ENCODE measurements at regions of chr2 and their contacts with region 1.

Region 1: GRCh38 chr2:42503291-42503690 is 9.5 kb upstream of the KCNG3 start:
- DNase-seq: no peak
- ATAC-seq: no peak
- H3K4me3 ChIP-seq: no peak overlapping the region
- H3K27ac ChIP-seq: peak overlapping the region; percentile 82
- H3K4me1 ChIP-seq: peaks cover 51% of the 10 kb centered on the region
- H3K27me3 ChIP-seq: no peaks in the 10 kb centered on the region
- CTCF ChIP-seq: no peak
- EP300 ChIP-seq: no peak
- POLR2A ChIP-seq: no peak
- RAD21 ChIP-seq: no peak

Region 2: DNA sequence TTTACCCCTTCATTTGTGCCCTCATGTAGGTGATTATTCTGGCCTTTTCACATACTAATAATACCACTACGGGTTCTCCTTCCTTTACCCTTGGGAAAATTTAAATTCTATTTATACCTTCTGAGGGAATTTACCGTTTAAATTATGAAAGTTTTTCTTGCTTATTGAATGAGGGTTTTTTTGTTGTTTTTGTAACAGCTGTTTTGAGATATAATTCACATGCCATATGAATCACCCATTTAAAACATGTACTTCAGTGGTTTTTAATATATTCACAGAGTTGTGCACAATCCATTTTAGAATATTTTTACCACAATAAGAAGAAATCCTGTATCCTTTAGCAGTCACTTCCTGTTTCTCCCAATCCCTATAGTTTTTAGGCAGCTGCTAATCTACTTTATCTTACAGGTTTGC is 279.4 kb before region 1 on chr2:
- CTCF ChIA-PET with region 1: no interaction called
- POLR2A ChIA-PET with region 1: no interaction called
- in situ Hi-C with region 1: no loop called
- intact Hi-C with region 1: no loop called
- DNase-seq: no peak
- ATAC-seq: no peak
- H3K4me3 ChIP-seq: no peak overlapping the region
- H3K27ac ChIP-seq: no peak overlapping the region
- H3K4me1 ChIP-seq: peaks cover 98% of the 10 kb centered on the region
- H3K27me3 ChIP-seq: no peaks in the 10 kb centered on the region
- CTCF ChIP-seq: no peak
- EP300 ChIP-seq: no peak
- POLR2A ChIP-seq: no peak
- RAD21 ChIP-seq: no peak

Region 3: GRCh38 chr2:42568401-42569115 is 65.3 kb after region 1 on chr2 and contains the start of gene MTA3:
- CTCF ChIA-PET with region 1: no interaction called
- POLR2A ChIA-PET with region 1: interaction called, 5 read pairs
- in situ Hi-C with region 1: no loop called
- intact Hi-C with region 1: loop called (anchors 2 kb)
- DNase-seq: peak; percentile 27
- ATAC-seq: peak; percentile 74
- H3K4me3 ChIP-seq: peak within 1 kb of the TSS; percentile 74 to 95 (median 75)
- H3K27ac ChIP-seq: peak within 1 kb of the TSS; percentile 79
- H3K4me1 ChIP-seq: peaks cover 53% of the 10 kb centered on the region
- H3K27me3 ChIP-seq: no peaks in the 10 kb centered on the region; a peak in 1 of 5 replicates
- CTCF ChIP-seq: no peak
- EP300 ChIP-seq: no peak
- POLR2A ChIP-seq: no peak
- RAD21 ChIP-seq: no peak; the same call in 1 of the 2 replicates
- total RNA-seq, gene MTA3: 48.8 and 57.6 TPM in 2 replicates

Region 4: GRCh38 chr2:43714164-43714563 is 1210.9 kb after region 1 on chr2:
- CTCF ChIA-PET with region 1: no interaction called
- POLR2A ChIA-PET with region 1: no interaction called
- in situ Hi-C with region 1: no loop called
- intact Hi-C with region 1: loop called (anchors 5 kb)
- DNase-seq: no peak
- ATAC-seq: no peak
- H3K4me3 ChIP-seq: no peak overlapping the region
- H3K27ac ChIP-seq: no peak overlapping the region
- H3K4me1 ChIP-seq: no peaks in the 10 kb centered on the region
- H3K27me3 ChIP-seq: no peaks in the 10 kb centered on the region
- CTCF ChIP-seq: no peak
- EP300 ChIP-seq: no peak
- POLR2A ChIP-seq: no peak
- RAD21 ChIP-seq: no peak